AG04450 (cell line): ENCODE measurements at regions of chr16 and their contacts with region 1.

Region 1: DNA sequence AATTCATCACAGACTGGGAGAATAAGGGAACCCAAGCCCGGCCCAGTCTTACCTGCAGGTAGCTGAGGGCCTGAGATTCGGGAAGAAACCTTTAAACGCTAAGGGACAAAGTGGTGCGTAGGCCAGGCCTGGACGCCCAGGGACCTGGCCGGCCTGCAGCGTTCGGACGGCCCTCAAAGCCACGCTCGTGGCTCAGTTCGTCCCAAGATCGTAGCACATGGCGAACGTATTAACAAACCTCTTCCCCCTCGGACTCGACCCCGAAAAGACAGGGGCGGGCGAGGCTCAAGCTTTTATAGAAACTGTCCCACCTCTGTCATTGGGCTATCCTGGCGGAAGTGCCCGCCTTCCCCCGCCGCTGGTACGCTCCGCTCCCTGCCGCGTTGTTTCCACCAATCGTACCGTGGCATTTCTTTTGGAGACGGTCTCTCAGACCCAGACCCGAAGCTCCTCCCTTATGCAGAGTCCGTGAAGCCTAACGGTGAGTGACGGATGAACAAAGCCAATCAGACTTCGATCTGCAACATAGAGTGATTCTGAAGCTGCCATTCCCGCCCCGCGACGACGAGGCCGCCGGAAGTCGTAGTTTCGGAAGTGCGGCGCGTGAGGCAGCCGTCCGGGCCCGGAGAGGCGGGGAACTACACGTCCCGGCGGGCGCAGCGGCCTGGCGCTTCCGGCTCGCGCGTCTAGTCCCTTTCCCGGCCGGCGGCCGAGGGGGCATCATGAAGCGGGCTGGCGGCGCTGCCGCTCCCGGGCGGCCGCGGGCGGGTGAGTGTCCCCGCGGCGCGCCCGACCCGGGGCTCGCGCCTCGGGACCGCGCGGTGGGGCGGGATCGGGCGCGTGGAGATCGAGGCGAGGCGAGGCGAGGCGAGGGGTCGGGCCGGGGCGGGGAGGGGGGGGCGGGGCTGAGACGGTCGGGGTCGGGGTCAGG is at the start of gene TRAF7:
- DNase-seq: peak; percentile 100
- H3K4me3 ChIP-seq: peak within 1 kb of the TSS; percentile 99
- H3K27ac ChIP-seq: peak within 1 kb of the TSS; percentile 73
- H3K27me3 ChIP-seq: no peaks in the 10 kb centered on the region
- CTCF ChIP-seq: no peak
- polyA plus RNA-seq, gene TRAF7: 35.2 and 49.3 TPM in 2 replicates

Region 2: GRCh38 chr16:1920727-1921171 is 234.6 kb before region 1 on chr16:
- CTCF ChIA-PET with region 1: no interaction called
- POLR2A ChIA-PET with region 1: no interaction called
- DNase-seq: no peak
- H3K4me3 ChIP-seq: no peak overlapping the region
- H3K27ac ChIP-seq: no peak overlapping the region
- H3K27me3 ChIP-seq: peaks cover 85% of the 10 kb centered on the region
- CTCF ChIP-seq: no peak

Region 3: GRCh38 chr16:1971796-1972489 is 183.4 kb before region 1 on chr16 and contains the start of gene TBL3:
- CTCF ChIA-PET with region 1: no interaction called
- POLR2A ChIA-PET with region 1: interaction called, 10 read pairs
- DNase-seq: peak; percentile 83
- H3K4me3 ChIP-seq: peak within 1 kb of the TSS; percentile 66
- H3K27ac ChIP-seq: peak within 1 kb of the TSS; percentile 92
- H3K27me3 ChIP-seq: no peaks in the 10 kb centered on the region
- CTCF ChIP-seq: no peak
- polyA plus RNA-seq, gene TBL3: 13.7 and 24.8 TPM in 2 replicates

Region 4: DNA sequence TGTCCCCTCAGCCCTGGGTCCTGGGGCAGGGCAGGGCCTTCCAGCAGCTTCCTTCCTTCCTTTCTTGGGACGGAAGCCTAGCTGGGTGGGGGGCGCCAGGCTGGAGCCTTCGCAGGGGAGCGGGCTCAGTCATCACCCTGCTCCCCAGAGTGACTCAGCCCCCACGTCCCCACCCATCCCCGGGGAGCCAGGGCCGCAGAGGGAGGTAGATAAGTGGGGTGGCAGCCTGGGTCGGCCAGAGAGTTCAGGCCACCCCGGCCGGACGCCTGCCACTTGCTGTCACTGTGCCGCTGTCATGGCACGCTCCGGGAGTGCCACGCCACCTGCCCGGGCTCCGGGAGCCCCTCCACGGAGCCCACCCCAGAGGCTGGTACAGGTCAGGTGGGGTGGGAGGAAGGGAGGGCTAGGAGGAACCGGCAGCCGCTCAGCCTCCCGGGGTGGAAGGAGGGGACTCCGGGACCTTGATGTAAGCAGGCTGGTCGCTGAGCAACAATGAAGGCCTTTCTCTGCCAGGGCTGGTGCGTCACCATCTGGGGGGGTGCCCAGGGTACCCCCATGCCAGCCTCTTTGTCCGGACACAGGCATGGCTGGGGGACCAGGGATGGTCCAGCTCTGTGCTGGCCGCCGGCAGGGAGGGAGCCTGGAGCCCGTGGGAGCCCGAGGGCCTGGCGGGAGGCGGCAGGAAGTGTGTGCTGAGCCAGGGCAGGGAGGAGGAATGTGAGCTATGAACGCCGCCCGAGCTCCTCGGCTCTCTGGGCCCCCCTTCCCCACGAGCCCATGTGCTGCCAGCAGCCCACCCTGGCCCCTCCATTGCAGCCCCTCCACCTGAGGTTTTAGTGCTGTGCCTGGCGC is 122.1 kb before region 1 on chr16:
- CTCF ChIA-PET with region 1: no interaction called
- POLR2A ChIA-PET with region 1: interaction called, 14 read pairs
- DNase-seq: no peak
- H3K4me3 ChIP-seq: peak overlapping the region; percentile 36
- H3K27ac ChIP-seq: peak overlapping the region; percentile 87
- H3K27me3 ChIP-seq: no peaks in the 10 kb centered on the region
- CTCF ChIP-seq: no peak

Region 5: DNA sequence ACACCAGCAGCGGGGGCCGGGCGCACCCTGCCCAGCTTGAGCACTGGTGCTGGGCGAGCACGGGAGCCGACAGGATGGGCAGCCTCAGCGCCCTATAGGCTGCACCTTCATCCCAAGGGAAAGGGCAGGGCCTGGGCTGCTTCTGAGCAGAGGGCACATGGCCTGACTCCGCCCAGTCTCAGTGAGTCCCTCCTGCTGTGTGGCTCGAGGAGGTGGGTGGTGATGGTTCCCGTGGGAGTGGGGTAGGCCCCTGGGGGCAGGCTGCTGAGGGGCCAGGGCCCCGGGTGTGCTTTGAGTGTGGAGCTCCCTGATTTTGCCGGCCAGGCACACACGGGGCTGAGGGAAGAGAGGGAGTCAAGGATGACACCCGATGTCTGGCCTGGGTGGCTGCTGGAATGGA is 69.7 kb before region 1 on chr16:
- CTCF ChIA-PET with region 1: no interaction called
- POLR2A ChIA-PET with region 1: interaction called, 10 read pairs
- DNase-seq: no peak
- H3K4me3 ChIP-seq: no peak overlapping the region
- H3K27ac ChIP-seq: no peak overlapping the region
- H3K27me3 ChIP-seq: no peaks in the 10 kb centered on the region
- CTCF ChIP-seq: no peak

Region 6: GRCh38 chr16:2102471-2102870 is 52.9 kb before region 1 on chr16:
- CTCF ChIA-PET with region 1: no interaction called
- POLR2A ChIA-PET with region 1: no interaction called
- DNase-seq: no peak
- H3K4me3 ChIP-seq: no peak overlapping the region
- H3K27ac ChIP-seq: no peak overlapping the region
- H3K27me3 ChIP-seq: no peaks in the 10 kb centered on the region
- CTCF ChIP-seq: no peak

Region 7: GRCh38 chr16:2187212-2187611 is 31.9 kb after region 1 on chr16:
- CTCF ChIA-PET with region 1: no interaction called
- POLR2A ChIA-PET with region 1: interaction called, 14 read pairs
- DNase-seq: no peak
- H3K4me3 ChIP-seq: no peak overlapping the region
- H3K27ac ChIP-seq: no peak overlapping the region
- H3K27me3 ChIP-seq: peaks cover 2% of the 10 kb centered on the region
- CTCF ChIP-seq: no peak

Region 8: GRCh38 chr16:2213817-2214720 is 58.7 kb after region 1 on chr16:
- CTCF ChIA-PET with region 1: no interaction called
- POLR2A ChIA-PET with region 1: interaction called, 27 read pairs
- DNase-seq: no peak
- H3K4me3 ChIP-seq: peak overlapping the region; percentile 67
- H3K27ac ChIP-seq: no peak overlapping the region
- H3K27me3 ChIP-seq: no peaks in the 10 kb centered on the region
- CTCF ChIP-seq: no peak

Region 9: DNA sequence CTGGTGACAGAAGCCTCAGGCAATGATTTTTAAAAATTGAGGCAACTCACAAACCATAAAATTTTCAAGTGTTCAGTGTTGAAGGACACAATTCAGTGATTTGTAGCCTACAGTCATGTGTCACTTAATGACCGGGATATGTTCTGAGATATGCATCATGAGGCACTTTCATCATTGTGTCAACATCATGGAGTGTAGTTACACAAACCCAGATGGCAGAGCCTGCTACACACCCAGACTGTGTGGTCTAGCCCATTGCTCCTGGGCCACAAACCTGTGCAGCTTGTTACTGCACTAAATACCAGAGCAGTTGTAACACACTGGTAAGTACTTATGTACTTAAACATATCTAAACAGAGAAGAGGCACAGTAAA is 644.5 kb after region 1 on chr16:
- CTCF ChIA-PET with region 1: no interaction called
- POLR2A ChIA-PET with region 1: no interaction called
- DNase-seq: no peak
- H3K4me3 ChIP-seq: no peak overlapping the region
- H3K27ac ChIP-seq: no peak overlapping the region
- H3K27me3 ChIP-seq: peaks cover 15% of the 10 kb centered on the region
- CTCF ChIP-seq: no peak